Activated CD4-positive, alpha-beta memory T cell treated with anti-CD3 and anti-CD28 coated beads for 36 hours (primary cell): ENCODE measurements at regions of chr16 and their contacts with region 1.

Region 1: GRCh38 chr16:1991948-1992703 is 2.4 kb downstream of the SYNGR3 start:
- DNase-seq: peak; percentile 99
- H3K4me3 Mint-ChIP-seq: peak overlapping the region; percentile 71
- H3K27ac Mint-ChIP-seq: no peak overlapping the region
- H3K4me1 Mint-ChIP-seq: peaks cover 25% of the 10 kb centered on the region
- H3K27me3 Mint-ChIP-seq: peaks cover 12% of the 10 kb centered on the region

Region 2: DNA sequence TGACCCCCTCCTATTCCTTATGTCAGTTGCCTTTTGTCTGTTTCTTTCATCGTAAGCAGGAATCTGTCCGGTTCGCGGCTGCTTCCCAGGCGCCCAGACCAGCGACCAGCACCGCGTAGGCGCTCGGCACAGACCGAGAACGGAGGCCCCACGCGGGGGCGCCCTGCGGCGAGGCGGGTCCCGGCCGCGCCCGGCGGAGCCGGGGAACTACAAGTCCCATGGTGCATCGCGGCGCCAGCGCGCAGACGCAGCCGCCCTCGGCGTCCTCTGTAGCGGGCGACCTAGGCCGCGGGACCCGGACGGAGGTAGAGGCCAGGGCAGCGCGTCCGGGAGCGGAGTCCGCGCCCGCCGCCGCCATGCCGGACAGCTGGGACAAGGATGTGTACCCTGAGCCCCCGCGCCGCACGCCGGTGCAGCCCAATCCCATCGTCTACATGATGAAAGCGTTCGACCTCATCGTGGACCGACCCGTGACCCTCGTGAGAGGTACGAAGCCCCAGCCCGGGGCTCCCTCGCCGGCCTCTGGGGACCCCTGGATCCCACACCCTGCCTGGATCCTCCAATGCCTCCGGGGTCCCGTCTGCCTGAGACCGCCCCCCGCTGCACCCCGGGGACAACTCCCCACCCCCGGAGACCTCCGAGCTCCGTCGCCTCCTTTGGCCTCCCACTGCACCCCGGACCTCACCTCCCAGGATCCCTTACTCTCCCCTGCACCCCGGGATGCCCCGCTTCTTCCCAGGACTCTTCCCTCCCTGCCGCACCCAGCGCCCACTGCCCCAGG is 32.7 kb before region 1 on chr16 and contains the start of gene NDUFB10:
- CTCF ChIA-PET with region 1: interaction called, 3 read pairs
- POLR2A ChIA-PET with region 1: interaction called, 25 read pairs
- intact Hi-C with region 1: loop called (anchors 1 kb)
- DNase-seq: peak; percentile 95
- H3K4me3 Mint-ChIP-seq: peak within 1 kb of the TSS; percentile 96
- H3K27ac Mint-ChIP-seq: peak within 1 kb of the TSS; percentile 86
- H3K4me1 Mint-ChIP-seq: peaks cover 40% of the 10 kb centered on the region
- H3K27me3 Mint-ChIP-seq: peaks cover 1% of the 10 kb centered on the region
- total RNA-seq, gene NDUFB10: 122 to 125 TPM

Region 3: GRCh38 chr16:1971796-1972489 is 20.2 kb before region 1 on chr16 and contains the start of gene TBL3:
- CTCF ChIA-PET with region 1: no interaction called
- POLR2A ChIA-PET with region 1: interaction called, 10 read pairs
- intact Hi-C with region 1: no loop called
- DNase-seq: peak; percentile 98
- H3K4me3 Mint-ChIP-seq: peak within 1 kb of the TSS; percentile 100
- H3K27ac Mint-ChIP-seq: peak within 1 kb of the TSS; percentile 100
- H3K4me1 Mint-ChIP-seq: peaks cover 20% of the 10 kb centered on the region
- H3K27me3 Mint-ChIP-seq: no peaks in the 10 kb centered on the region
- total RNA-seq, gene TBL3: 45.7 to 47.3 TPM

Region 4: DNA sequence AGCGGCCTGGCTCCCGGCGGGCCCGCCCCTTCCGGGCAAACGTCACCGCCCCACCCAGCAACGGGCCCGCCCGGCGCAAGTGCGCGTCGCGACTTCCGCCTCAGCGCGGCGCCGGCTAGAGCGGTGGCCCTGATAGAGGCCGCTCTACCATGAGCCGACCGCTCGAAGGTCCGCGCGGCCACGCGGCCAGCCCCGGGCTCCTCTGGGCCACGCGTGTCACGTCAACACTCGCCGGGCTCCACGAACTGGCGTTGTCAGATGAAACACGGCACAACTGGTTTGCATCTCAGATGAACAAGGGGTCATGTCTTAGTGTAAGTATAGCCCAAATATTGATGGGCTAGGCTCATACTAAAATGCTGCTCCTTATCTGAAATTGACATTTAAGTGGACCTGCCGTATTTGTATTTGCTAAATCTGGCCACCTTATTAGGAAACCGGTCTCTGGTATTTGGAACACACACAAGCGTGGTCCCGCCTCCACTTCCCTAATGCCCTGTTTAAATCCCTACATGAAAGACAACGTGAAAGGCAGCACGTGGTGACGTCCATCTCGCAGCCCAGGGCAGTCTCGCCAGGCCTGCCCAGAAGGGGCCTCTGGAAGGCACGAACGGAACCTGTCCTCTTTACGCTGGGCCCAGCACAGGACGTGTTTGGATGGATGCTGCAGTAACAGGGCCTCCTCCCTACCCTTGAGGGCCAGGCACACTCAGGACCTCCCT is 17.8 kb after region 1 on chr16 and contains the start of gene ZNF598:
- CTCF ChIA-PET with region 1: interaction called, 12 read pairs
- POLR2A ChIA-PET with region 1: interaction called, 4 read pairs
- intact Hi-C with region 1: loop called (anchors 2 kb)
- DNase-seq: peak; percentile 82
- H3K4me3 Mint-ChIP-seq: peak within 1 kb of the TSS; percentile 84
- H3K27ac Mint-ChIP-seq: peak within 1 kb of the TSS; percentile 83
- H3K4me1 Mint-ChIP-seq: peaks cover 35% of the 10 kb centered on the region
- H3K27me3 Mint-ChIP-seq: no peaks in the 10 kb centered on the region
- total RNA-seq, gene ZNF598: 67.2 to 67.6 TPM

Region 5: DNA sequence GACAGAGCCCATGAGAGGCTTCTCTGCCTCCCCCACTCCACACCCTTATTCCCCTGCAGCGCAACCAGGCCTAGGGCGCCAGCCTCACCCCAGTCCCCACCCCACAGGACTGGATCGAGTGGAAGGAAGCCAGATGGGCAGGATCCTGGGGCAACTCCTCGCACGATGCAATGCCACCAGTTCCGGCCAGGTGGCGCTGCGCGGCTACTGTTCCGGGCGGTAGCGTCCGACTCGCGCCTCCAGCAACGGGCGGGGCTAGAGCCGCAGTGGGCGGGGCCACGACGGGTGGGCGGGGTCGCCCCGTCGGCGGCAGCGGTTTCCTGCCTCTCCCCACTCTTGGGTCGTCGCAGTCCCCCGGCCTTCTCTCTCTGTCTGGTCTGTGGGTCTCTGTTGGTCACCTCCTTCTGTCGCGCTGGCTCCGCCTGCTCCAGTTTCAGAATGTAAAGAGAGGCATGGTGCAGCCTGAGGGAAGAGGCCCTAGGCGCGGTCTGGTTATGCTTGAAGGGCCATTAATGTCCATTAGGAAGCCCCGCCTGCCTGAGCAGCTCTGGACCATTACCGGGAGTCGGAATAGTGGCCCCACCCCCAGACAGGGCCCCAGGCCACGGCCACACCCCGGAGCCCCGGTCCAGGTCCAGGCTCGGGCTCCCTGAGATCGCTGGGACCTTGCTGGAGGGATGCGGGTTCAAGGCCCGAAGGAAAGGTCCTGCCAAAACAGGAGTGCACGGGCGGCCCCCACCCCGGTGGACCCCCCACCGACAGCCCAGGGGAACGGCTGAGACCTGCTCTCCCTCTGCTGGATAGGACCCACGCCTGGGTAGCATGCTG is 31.2 kb after region 1 on chr16:
- CTCF ChIA-PET with region 1: no interaction called
- POLR2A ChIA-PET with region 1: no interaction called
- intact Hi-C with region 1: no loop called
- DNase-seq: peak; percentile 96
- H3K4me3 Mint-ChIP-seq: peak overlapping the region; percentile 58
- H3K27ac Mint-ChIP-seq: no peak overlapping the region
- H3K4me1 Mint-ChIP-seq: peaks cover 17% of the 10 kb centered on the region
- H3K27me3 Mint-ChIP-seq: peaks cover 34% of the 10 kb centered on the region

Region 6: DNA sequence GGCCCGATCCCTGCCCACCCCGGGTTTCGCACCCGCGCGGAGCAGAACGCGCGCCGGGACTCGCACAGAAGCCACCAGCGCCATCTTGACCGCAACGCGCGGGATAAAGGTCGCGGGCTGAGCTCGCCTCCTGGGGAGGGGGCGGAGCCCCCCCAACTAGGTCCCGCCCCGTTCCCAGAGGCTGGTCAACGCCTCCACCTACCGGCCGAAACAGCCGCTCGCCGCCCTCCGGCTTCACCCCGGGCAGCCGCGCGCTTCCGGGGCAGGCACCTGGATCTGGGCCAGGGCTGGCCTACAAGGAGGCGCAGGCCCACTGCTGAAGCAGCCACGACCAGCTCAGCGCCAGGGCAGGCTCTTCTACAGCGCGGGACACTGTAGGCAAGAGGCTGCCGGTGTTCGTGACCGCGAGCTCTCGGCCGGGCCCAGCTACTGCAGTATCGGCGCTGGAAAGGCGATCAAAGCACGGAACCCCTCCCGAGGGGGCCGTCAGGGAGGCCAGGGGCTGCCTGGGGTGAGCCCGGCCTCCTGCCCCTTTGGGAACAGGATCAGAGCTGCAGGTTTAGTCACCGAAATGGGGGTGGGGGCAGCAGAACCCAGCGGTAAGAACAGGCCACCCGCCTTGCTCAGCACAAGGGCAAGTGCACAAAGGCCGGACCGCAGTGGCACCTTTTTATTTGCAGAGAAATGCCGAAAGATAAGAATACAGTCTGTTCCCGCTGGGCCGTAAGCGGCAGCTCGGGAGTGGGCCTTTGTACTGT is 259.5 kb after region 1 on chr16 and contains the start of gene ECI1:
- CTCF ChIA-PET with region 1: no interaction called
- POLR2A ChIA-PET with region 1: no interaction called
- intact Hi-C with region 1: no loop called
- DNase-seq: peak; percentile 92
- H3K4me3 Mint-ChIP-seq: peak within 1 kb of the TSS; percentile 88
- H3K27ac Mint-ChIP-seq: peak within 1 kb of the TSS; percentile 89
- H3K4me1 Mint-ChIP-seq: peaks cover 10% of the 10 kb centered on the region
- H3K27me3 Mint-ChIP-seq: no peaks in the 10 kb centered on the region
- total RNA-seq, gene ECI1: 50.7 to 52.5 TPM

Region 7: GRCh38 chr16:2710711-2711231 is 718.6 kb after region 1 on chr16:
- CTCF ChIA-PET with region 1: no interaction called
- POLR2A ChIA-PET with region 1: no interaction called
- intact Hi-C with region 1: no loop called
- DNase-seq: no peak
- H3K4me3 Mint-ChIP-seq: no peak overlapping the region
- H3K27ac Mint-ChIP-seq: no peak overlapping the region
- H3K4me1 Mint-ChIP-seq: peaks cover 4% of the 10 kb centered on the region
- H3K27me3 Mint-ChIP-seq: no peaks in the 10 kb centered on the region